ENCODE measurements at regions of chr4 and their contacts with region 1.

Region 1: GRCh38 chr4:140326395-140326993 is 47.0 kb upstream of the SCOC start:
- DNase-seq: peak; percentile 61
- H3K4me3 Mint-ChIP-seq: no peak overlapping the region
- H3K27ac Mint-ChIP-seq: no peak overlapping the region
- H3K4me1 Mint-ChIP-seq: no peaks in the 10 kb centered on the region
- H3K27me3 Mint-ChIP-seq: no peaks in the 10 kb centered on the region
- CTCF ChIP-seq: peak; percentile 76

Region 2: DNA sequence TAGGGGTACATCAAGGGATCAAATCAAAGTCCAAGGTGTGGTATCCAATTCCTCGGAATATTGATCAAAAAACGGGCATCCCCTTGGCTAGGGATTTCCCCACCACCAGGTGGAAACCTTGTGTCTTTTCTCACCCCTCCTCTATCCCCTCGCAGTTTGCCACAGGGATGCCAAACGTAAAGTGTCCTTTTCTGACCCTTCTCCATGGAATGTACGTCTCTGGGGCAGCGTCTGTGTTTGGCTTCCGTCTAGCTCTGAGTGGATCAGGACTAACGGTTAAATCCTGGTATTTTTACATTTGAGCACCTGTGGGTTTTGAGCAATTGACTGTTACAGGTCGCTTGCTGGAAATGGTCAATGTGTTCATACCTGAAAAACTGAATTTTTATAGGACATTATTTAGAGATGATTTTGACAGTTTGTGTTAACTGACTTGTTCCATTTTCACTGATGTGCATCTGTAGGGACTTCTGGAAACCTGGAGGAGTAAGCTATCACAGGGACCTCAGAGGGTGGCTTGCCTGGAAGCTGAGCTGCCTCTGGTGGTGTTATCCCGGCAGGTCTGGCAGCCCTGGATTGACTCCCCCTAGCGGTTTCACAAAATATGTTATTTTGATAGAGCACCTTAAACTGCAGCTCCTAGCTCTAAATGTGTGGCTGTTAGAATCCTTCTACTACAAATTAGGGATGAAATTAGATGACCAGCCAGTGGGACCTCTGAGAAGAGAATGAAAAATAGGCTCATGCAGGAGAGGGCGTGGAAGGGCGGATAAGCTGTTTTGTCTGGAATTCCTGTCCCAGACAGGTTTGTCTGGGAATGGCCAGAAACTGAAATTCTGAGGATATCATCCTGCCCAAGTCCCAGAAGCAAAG is 669.6 kb before region 1 on chr4:
- CTCF ChIA-PET with region 1: interaction called, 44 read pairs
- POLR2A ChIA-PET with region 1: interaction called, 3 read pairs
- intact Hi-C with region 1: loop called (anchors 1 kb)
- DNase-seq: peak; percentile 83
- H3K4me3 Mint-ChIP-seq: peak overlapping the region; percentile 64
- H3K27ac Mint-ChIP-seq: peak overlapping the region; percentile 85
- H3K4me1 Mint-ChIP-seq: peaks cover 25% of the 10 kb centered on the region
- H3K27me3 Mint-ChIP-seq: no peaks in the 10 kb centered on the region
- CTCF ChIP-seq: peak; percentile 63

Region 3: DNA sequence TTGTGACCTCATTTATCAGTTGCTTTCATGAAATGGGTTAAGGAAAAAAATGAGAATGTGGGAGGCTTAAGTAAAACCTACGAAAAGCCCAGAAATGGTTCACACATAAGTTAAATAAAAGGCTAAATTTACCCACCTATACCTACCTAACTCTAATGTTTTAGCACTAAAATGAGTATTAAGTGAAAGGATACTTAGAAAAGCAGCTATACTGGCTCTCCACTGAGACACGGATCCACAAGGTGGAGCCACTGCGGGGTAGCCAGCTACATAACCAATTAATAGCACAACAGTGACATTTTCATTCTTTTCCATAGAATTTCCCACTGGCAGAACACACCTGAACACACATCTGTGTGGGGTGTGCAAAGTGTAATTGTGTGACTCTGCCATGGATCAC is 274.4 kb before region 1 on chr4:
- CTCF ChIA-PET with region 1: interaction called, 7 read pairs
- POLR2A ChIA-PET with region 1: no interaction called
- intact Hi-C with region 1: loop called (anchors 1 kb)
- DNase-seq: peak; percentile 47
- H3K4me3 Mint-ChIP-seq: no peak overlapping the region
- H3K27ac Mint-ChIP-seq: no peak overlapping the region
- H3K4me1 Mint-ChIP-seq: peaks cover 13% of the 10 kb centered on the region
- H3K27me3 Mint-ChIP-seq: no peaks in the 10 kb centered on the region
- CTCF ChIP-seq: peak; percentile 57

Region 4: GRCh38 chr4:140260227-140260626 is 66.3 kb before region 1 on chr4:
- CTCF ChIA-PET with region 1: interaction called, 6 read pairs
- POLR2A ChIA-PET with region 1: no interaction called
- intact Hi-C with region 1: loop called (anchors 2 kb)
- DNase-seq: peak; percentile 70
- H3K4me3 Mint-ChIP-seq: no peak overlapping the region
- H3K27ac Mint-ChIP-seq: no peak overlapping the region
- H3K4me1 Mint-ChIP-seq: peaks cover 19% of the 10 kb centered on the region
- H3K27me3 Mint-ChIP-seq: no peaks in the 10 kb centered on the region
- CTCF ChIP-seq: no peak

Region 5: GRCh38 chr4:140343303-140343702 is 16.8 kb after region 1 on chr4:
- CTCF ChIA-PET with region 1: interaction called, 11 read pairs
- POLR2A ChIA-PET with region 1: no interaction called
- intact Hi-C with region 1: no loop called
- DNase-seq: peak; percentile 68
- H3K4me3 Mint-ChIP-seq: no peak overlapping the region
- H3K27ac Mint-ChIP-seq: no peak overlapping the region
- H3K4me1 Mint-ChIP-seq: peaks cover 5% of the 10 kb centered on the region
- H3K27me3 Mint-ChIP-seq: no peaks in the 10 kb centered on the region
- CTCF ChIP-seq: no peak

Region 6: DNA sequence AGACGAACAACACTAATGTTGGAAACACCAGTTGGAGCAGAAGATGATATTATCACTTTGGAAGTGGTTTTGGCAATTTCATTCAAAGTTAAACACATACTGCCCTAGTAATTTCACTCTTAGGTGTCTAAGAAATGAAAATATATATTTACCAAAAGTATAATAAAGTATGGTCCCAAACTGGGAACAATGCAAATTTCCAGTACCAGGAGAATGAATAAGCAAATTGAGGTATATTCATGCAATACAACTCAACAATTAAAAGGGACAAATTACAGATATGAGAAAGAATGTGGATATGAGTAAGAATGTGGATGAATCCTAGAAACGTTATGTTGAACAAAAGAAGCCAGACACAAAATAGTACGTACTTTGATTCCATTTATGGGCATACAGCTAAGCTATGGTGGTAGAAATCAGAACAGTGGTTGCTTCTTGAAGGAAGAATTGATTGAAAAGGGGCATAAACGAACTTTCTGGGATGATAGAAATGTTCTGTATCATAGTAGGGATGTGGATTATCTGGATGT is 207.5 kb after region 1 on chr4:
- CTCF ChIA-PET with region 1: no interaction called
- POLR2A ChIA-PET with region 1: no interaction called
- intact Hi-C with region 1: no loop called
- DNase-seq: no peak
- H3K4me3 Mint-ChIP-seq: no peak overlapping the region
- H3K27ac Mint-ChIP-seq: no peak overlapping the region
- H3K4me1 Mint-ChIP-seq: no peaks in the 10 kb centered on the region
- H3K27me3 Mint-ChIP-seq: no peaks in the 10 kb centered on the region
- CTCF ChIP-seq: no peak

Region 7: GRCh38 chr4:140851032-140851636 is 524.6 kb after region 1 on chr4:
- CTCF ChIA-PET with region 1: interaction called, 6 read pairs
- POLR2A ChIA-PET with region 1: no interaction called
- intact Hi-C with region 1: loop called (anchors 1 kb)
- DNase-seq: peak; percentile 79
- H3K4me3 Mint-ChIP-seq: no peak overlapping the region
- H3K27ac Mint-ChIP-seq: no peak overlapping the region
- H3K4me1 Mint-ChIP-seq: peaks cover 15% of the 10 kb centered on the region
- H3K27me3 Mint-ChIP-seq: no peaks in the 10 kb centered on the region
- CTCF ChIP-seq: peak; percentile 82